ENCODE measurements at regions of chr15 and their contacts with region 1.

Region 1: GRCh38 chr15:51192521-51193280 is 98.0 kb upstream of the TNFAIP8L3 start:
- DNase-seq: peak; percentile 89
- ATAC-seq: peak; percentile 86
- H3K4me3 Mint-ChIP-seq: no peak overlapping the region
- H3K27ac Mint-ChIP-seq: no peak overlapping the region
- H3K4me1 Mint-ChIP-seq: peaks cover 4% of the 10 kb centered on the region
- H3K27me3 Mint-ChIP-seq: peaks cover 21% of the 10 kb centered on the region
- CTCF ChIP-seq: peak; percentile 94

Region 2: GRCh38 chr15:51172193-51172592 is 20.5 kb before region 1 on chr15:
- CTCF ChIA-PET with region 1: interaction called, 14 read pairs
- POLR2A ChIA-PET with region 1: no interaction called
- intact Hi-C with region 1: no loop called
- DNase-seq: no peak
- ATAC-seq: no peak
- H3K4me3 Mint-ChIP-seq: no peak overlapping the region
- H3K27ac Mint-ChIP-seq: no peak overlapping the region
- H3K4me1 Mint-ChIP-seq: no peaks in the 10 kb centered on the region
- H3K27me3 Mint-ChIP-seq: peaks cover 16% of the 10 kb centered on the region
- CTCF ChIP-seq: no peak

Region 3: GRCh38 chr15:51203797-51204196 is 11.1 kb after region 1 on chr15:
- CTCF ChIA-PET with region 1: interaction called, 20 read pairs
- POLR2A ChIA-PET with region 1: no interaction called
- intact Hi-C with region 1: no loop called
- DNase-seq: no peak
- ATAC-seq: no peak
- H3K4me3 Mint-ChIP-seq: no peak overlapping the region
- H3K27ac Mint-ChIP-seq: no peak overlapping the region
- H3K4me1 Mint-ChIP-seq: no peaks in the 10 kb centered on the region
- H3K27me3 Mint-ChIP-seq: peaks cover 9% of the 10 kb centered on the region
- CTCF ChIP-seq: no peak